Activated CD8-positive, alpha-beta T cell treated with anti-CD3 and anti-CD28 coated beads for 36 hours (primary cell): ENCODE measurements at regions of chrX and their contacts with region 1.

Region 1: DNA sequence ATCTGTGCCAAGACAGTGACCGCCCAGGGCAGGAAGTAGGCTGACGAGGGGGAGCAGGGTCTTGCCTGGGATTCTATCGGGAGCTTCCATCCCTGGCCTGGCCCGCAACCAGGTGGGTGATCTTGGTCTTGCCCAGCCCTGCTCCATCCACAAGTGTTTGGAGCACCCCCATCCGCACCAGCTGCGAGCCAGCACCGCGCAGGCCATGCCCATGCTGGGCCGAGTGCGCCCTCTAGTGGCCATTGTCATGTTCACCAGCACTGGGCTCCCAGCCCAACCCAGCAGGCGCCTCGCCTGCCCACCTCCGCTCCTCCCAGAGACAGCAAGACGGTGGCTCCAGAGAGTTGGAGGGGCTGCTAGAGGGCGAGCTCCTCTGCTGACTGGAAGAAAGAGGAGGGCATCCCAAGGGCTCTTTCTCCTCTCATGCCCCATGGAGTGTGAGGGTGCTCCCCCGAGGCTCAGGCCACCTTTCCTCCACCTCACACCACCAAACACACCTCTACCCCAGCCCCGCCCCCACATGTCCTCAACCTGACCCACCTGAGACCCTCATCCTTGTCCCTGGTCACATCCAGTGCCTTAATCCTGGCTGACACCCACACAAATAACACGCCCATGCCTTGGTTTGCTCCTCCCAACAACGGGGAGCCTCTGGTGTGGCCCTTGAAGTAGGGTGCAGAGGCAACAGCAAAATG is 9.8 kb upstream of the ATP2B3 start:
- DNase-seq: peak; percentile 86
- ATAC-seq: peak; percentile 98
- H3K4me3 Mint-ChIP-seq: no peak overlapping the region
- H3K27ac Mint-ChIP-seq: no peak overlapping the region
- H3K4me1 Mint-ChIP-seq: no peaks in the 10 kb centered on the region
- H3K27me3 Mint-ChIP-seq: no peaks in the 10 kb centered on the region
- CTCF ChIP-seq: peak; percentile 64

Region 2: GRCh38 chrX:152941328-152942106 is 566.1 kb before region 1 on chrX:
- CTCF ChIA-PET with region 1: interaction called, 10 read pairs
- POLR2A ChIA-PET with region 1: no interaction called
- intact Hi-C with region 1: no loop called
- DNase-seq: peak; percentile 91
- ATAC-seq: peak; percentile 99
- H3K4me3 Mint-ChIP-seq: peak overlapping the region; percentile 86
- H3K27ac Mint-ChIP-seq: peak overlapping the region; percentile 85
- H3K4me1 Mint-ChIP-seq: no peaks in the 10 kb centered on the region
- H3K27me3 Mint-ChIP-seq: no peaks in the 10 kb centered on the region
- CTCF ChIP-seq: peak; percentile 60

Region 3: GRCh38 chrX:153460845-153461244 is 46.8 kb before region 1 on chrX:
- CTCF ChIA-PET with region 1: interaction called, 18 read pairs
- POLR2A ChIA-PET with region 1: no interaction called
- intact Hi-C with region 1: no loop called
- DNase-seq: peak; percentile 56
- ATAC-seq: peak; percentile 70
- H3K4me3 Mint-ChIP-seq: no peak overlapping the region
- H3K27ac Mint-ChIP-seq: no peak overlapping the region
- H3K4me1 Mint-ChIP-seq: no peaks in the 10 kb centered on the region
- H3K27me3 Mint-ChIP-seq: no peaks in the 10 kb centered on the region
- CTCF ChIP-seq: peak; percentile 49

Region 4: GRCh38 chrX:153470435-153471363 is 36.9 kb before region 1 on chrX and contains the start of gene HAUS7:
- CTCF ChIA-PET with region 1: interaction called, 43 read pairs
- POLR2A ChIA-PET with region 1: interaction called, 3 read pairs
- intact Hi-C with region 1: loop called (anchors 5 kb)
- DNase-seq: peak; percentile 89
- ATAC-seq: peak; percentile 88
- H3K4me3 Mint-ChIP-seq: peak within 1 kb of the TSS; percentile 81
- H3K27ac Mint-ChIP-seq: peak within 1 kb of the TSS; percentile 78
- H3K4me1 Mint-ChIP-seq: peaks cover 17% of the 10 kb centered on the region
- H3K27me3 Mint-ChIP-seq: no peaks in the 10 kb centered on the region
- CTCF ChIP-seq: peak; percentile 33
- total RNA-seq, gene HAUS7: 47.2 to 58.8 TPM

Region 5: DNA sequence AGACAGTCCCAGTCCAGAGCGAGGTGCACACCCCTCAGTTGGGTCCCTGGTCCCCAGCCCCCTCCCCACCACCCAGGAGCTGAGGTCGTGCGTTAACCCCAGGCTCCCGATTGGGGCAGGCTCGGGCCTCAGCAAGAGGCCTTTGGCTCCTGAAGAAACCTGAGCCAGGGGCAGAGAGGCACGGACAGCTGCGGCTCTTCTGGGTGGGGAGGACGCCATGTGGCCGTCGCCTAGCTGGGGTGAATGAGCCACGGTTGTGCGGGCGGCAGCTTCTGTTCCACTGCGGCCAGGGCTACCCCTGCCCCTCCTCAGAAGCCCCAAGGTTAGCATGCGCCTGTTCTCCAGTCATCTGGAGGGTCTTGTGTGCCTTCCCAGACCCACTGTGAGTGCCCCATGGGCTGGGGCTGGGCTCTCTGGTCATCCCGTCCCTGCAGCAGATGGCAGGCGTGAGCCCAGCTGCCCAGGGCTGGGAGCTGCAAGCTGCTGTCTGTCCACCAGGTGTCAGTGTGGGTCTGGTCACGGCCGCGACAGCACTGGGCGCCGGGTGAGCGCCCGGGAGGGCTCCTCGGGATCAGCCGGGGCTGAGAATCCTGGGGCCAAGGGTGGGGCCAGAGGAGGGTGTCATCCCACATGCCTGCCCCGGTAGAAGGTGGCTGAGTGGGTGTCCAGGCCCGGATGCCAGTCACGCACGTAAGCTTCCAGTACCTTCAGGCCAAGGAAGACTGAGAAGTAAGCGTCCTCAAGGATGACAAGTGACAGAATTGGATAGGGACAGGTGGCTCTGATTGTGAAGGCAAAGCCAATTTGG is 31.7 kb after region 1 on chrX:
- CTCF ChIA-PET with region 1: no interaction called
- POLR2A ChIA-PET with region 1: no interaction called
- intact Hi-C with region 1: no loop called
- DNase-seq: peak; percentile 63
- ATAC-seq: peak; percentile 94
- H3K4me3 Mint-ChIP-seq: no peak overlapping the region
- H3K27ac Mint-ChIP-seq: no peak overlapping the region
- H3K4me1 Mint-ChIP-seq: no peaks in the 10 kb centered on the region
- H3K27me3 Mint-ChIP-seq: no peaks in the 10 kb centered on the region
- CTCF ChIP-seq: peak; percentile 63